ENCODE measurements at regions of chr1 and their contacts with region 1.

Region 1: GRCh38 chr1:206912445-206913095 is 9.2 kb downstream of the FCMR start:
- DNase-seq: peak; percentile 77 to 87
- ATAC-seq: peak; percentile 58 to 71; a peak in 4 of 6 replicates
- H3K4me3 ChIP-seq: no peak overlapping the region
- H3K27ac ChIP-seq: no peak overlapping the region
- H3K4me1 ChIP-seq: peaks cover 4% of the 10 kb centered on the region; the same call in 1 of the 3 replicates
- CTCF ChIP-seq: peak; percentile 79
- EP300 ChIP-seq: no peak
- POLR2A ChIP-seq: no peak
- RAD21 ChIP-seq: peak; percentile 85 to 89

Region 2: DNA sequence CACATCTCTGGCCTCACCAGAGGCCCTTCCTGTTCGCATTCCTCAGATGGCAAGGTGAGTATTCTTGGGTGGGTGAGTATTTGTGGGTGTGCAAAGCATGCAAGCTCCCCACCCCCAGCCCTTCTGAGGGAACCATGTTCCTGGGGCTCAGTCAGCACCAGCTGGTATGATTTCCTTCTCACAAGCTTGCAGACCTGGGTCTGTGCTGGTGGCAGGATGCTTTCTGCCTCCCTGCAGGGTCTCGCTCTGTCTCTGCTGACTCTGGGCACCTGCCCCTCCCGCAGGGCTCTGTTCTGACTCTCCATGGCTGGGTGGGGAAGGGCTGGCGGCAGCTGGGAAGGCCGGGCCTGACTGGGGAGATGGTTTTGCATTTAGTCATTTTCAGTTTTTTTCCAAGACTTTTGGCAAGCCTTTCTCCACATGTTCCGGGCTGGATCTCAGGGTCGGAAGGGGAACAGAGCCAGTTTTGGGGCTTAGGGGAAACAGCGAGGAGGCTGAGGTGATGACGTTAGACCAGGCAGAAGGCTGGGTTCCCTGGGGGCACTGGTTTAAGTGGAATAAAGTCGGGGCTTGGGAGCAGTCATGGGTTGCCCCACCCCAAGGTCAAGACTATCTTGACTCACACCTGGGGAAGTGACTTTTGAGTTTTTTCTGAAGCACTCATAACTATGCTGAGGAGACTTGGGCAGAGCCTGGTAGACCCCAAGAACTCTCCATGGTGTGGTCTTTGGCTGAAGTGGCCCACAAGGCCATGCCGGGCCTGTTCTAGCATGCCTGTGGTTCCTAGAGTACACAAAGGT is 399.1 kb before region 1 on chr1:
- CTCF ChIA-PET with region 1: no interaction called
- POLR2A ChIA-PET with region 1: no interaction called
- DNase-seq: no peak
- ATAC-seq: peak; percentile 42 to 60; a peak in 4 of 6 replicates
- H3K4me3 ChIP-seq: no peak overlapping the region
- H3K27ac ChIP-seq: peak overlapping the region; percentile 39 to 55; a peak in 3 of 6 replicates
- H3K4me1 ChIP-seq: peaks cover 16% of the 10 kb centered on the region
- CTCF ChIP-seq: no peak
- EP300 ChIP-seq: no peak
- POLR2A ChIP-seq: no peak
- RAD21 ChIP-seq: no peak

Region 3: DNA sequence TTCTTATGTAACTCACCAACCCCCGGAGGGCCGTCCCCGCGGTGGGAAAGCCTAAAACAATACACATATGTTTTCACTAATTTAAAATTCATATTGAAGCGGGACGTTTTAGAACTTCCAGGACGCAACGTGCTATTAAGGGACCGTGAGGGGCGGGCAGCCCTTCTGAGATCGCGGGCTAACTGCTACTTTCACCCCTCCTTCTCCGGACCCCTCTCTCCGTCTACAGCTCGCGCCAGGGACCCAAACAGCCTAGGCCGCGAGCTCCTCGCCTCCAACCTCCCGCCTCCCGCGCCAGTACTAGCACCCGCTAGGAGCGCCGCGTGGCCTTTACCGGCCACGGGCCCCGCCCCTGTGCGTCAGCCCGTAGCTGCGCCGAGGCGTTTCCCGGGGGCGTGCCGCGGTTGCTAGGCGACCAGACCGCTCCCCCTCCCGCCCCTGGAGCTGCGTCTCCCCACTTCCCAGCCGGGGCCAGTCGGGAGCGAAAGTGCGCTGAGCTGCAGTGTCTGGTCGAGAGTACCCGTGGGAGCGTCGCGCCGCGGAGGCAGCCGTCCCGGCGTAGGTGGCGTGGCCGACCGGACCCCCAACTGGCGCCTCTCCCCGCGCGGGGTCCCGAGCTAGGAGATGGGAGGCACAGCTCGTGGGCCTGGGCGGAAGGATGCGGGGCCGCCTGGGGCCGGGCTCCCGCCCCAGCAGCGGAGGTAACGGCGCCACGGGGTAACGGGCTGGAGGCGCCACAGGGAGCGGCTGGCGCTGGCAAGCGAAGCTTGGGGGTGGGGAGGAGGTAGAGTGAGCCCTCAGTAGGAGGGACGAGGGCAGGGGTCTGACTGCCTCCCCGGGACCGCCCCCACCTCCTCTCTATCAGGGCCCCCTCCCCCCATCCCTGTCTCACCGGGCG is 277.2 kb before region 1 on chr1 and contains the start of gene DYRK3:
- CTCF ChIA-PET with region 1: interaction called, 31 read pairs
- POLR2A ChIA-PET with region 1: interaction called, 11 read pairs
- DNase-seq: peak; percentile 87 to 93
- ATAC-seq: peak; percentile 91 to 95
- H3K4me3 ChIP-seq: peak within 1 kb of the TSS; percentile 91
- H3K27ac ChIP-seq: peak within 1 kb of the TSS; percentile 88 to 89
- H3K4me1 ChIP-seq: peaks cover 32% of the 10 kb centered on the region; the same call in 2 of the 3 replicates
- CTCF ChIP-seq: no peak
- EP300 ChIP-seq: no peak
- POLR2A ChIP-seq: peak; percentile 91
- RAD21 ChIP-seq: no peak; a peak in 1 of 5 replicates
- polyA plus RNA-seq, gene DYRK3: 7.3 and 9.3 TPM in 2 replicates

Region 4: DNA sequence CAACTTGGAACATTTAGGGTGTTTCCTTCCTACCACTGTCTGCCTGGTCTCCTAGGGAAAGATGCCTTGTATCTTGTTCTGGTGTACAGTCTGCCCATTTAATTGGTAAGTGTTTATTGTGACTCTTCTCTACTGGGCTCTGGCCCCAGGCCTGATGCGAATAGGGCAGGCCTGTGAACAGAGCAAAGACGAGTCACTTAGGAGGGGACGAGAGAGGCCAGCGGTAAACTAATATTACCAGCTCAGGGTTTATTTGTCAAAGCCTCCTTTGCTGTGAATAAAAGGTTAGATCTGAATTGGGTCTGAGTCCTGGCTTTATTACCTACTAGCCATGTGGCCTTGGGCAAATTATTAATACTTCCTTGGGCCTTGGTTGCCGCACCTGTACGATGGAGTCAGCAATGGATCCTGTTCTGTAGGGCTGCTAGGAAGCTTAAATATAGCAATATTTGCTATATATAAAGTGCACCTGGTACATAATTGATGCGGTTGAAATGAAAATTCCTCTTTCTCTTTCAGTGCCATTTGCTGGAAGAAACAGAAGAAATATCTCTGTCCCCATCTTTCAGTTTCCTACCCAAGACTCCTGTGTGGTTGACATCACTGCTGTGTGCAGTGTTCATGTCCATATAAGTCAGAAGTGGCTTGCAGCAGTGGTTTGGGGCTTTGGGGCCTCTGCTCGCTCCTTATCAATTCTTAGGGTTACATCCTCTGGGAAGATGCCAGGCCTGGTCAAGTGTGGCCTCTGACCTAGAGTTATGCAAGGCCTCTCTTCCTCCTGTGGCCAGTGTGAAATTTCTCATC is 195.5 kb before region 1 on chr1:
- CTCF ChIA-PET with region 1: interaction called, 96 read pairs
- POLR2A ChIA-PET with region 1: no interaction called
- DNase-seq: no peak
- ATAC-seq: no peak
- H3K4me3 ChIP-seq: no peak overlapping the region
- H3K27ac ChIP-seq: peak overlapping the region; percentile 70 to 74
- H3K4me1 ChIP-seq: peaks cover 88% of the 10 kb centered on the region
- CTCF ChIP-seq: no peak
- EP300 ChIP-seq: no peak
- POLR2A ChIP-seq: no peak
- RAD21 ChIP-seq: no peak

Region 5: GRCh38 chr1:206786212-206786886 is 126.2 kb before region 1 on chr1:
- CTCF ChIA-PET with region 1: interaction called, 11 read pairs
- POLR2A ChIA-PET with region 1: no interaction called
- DNase-seq: no peak
- ATAC-seq: no peak
- H3K4me3 ChIP-seq: no peak overlapping the region
- H3K27ac ChIP-seq: no peak overlapping the region
- H3K4me1 ChIP-seq: no peaks in the 10 kb centered on the region
- CTCF ChIP-seq: no peak
- EP300 ChIP-seq: no peak
- POLR2A ChIP-seq: no peak
- RAD21 ChIP-seq: no peak

Region 6: GRCh38 chr1:206865013-206865671 is 47.4 kb before region 1 on chr1 and contains the start of gene IL20:
- CTCF ChIA-PET with region 1: interaction called, 17 read pairs
- POLR2A ChIA-PET with region 1: no interaction called
- DNase-seq: peak; percentile 40 to 76
- ATAC-seq: peak in 1 of 2 experiments; percentile 88; a peak in 3 of 6 replicates
- H3K4me3 ChIP-seq: no peak within 1 kb of the TSS
- H3K27ac ChIP-seq: no peak within 1 kb of the TSS
- H3K4me1 ChIP-seq: peaks cover 7% of the 10 kb centered on the region; the same call in 1 of the 3 replicates
- CTCF ChIP-seq: peak; percentile 69
- EP300 ChIP-seq: no peak
- POLR2A ChIP-seq: no peak
- RAD21 ChIP-seq: peak; percentile 58 to 61
- polyA plus RNA-seq, gene IL20: 0.05 and 0.13 TPM in 2 replicates

Region 7: DNA sequence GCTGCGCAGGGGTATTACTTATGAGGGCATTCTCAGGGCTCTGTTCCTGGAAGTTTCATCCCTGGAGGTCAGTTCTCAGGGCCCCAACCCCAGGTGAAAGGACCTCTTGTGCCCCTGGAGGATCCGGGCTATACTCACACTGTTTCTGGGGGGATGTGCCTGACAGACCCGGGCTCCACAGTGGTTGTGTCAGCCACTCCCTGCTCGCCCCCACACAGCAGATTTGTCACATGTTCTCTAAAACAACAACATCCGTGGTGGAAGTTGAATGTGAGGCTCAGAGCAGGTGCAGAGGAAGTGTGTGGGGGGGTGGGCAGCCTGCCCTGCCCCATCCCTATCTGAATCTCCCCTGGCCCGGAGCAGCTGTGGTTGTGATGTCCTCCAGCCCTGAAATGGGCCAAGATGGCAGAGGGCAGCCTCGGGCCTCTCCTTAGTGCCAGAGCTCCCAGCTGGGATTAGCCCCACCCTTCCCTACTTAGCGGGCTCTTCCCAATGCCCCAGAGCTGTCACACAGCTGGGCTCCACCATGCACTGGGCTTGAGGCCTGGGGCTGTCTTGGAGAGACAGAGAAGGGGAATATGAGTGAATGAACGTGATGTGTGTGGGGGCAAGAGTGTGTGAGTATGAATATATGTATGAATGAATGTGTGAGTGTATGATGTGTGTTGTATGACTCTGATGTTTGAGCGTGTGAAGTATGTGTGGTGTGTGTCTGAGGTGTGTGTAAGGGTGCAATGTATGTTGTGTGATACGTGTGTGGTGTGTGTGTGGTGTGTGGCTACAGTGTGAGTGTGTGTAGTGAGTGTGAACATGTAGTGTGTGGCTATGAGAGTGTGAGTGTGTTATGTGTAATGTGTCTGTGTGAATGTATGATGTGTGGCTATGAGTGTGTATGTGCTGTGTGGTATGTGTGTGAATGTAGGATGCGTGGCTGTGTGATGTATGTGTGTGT is 10.7 kb after region 1 on chr1:
- CTCF ChIA-PET with region 1: interaction called, 27 read pairs
- POLR2A ChIA-PET with region 1: no interaction called
- DNase-seq: no peak
- ATAC-seq: no peak
- H3K4me3 ChIP-seq: no peak overlapping the region
- H3K27ac ChIP-seq: no peak overlapping the region
- H3K4me1 ChIP-seq: peaks cover 10% of the 10 kb centered on the region
- CTCF ChIP-seq: no peak
- EP300 ChIP-seq: no peak
- POLR2A ChIP-seq: no peak
- RAD21 ChIP-seq: no peak

Region 8: DNA sequence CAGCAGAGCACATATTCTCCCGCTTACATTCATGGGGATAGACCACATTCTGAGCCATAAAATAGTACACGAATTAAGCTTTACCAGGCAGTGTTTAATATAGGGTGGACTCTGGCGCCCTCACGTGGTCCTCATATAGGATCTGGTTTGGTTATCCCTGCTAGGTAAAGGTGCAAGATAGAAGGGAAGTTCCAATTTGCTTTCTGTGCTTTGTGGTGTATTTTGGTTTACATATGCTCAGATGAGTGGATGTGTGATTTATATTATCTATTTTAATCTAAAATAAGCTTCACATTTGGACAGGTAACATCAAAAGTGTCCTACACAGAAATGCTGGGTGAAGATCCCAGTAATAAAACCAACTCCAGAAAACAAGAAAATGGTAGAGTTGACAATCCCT is 587.0 kb after region 1 on chr1:
- CTCF ChIA-PET with region 1: interaction called, 11 read pairs
- POLR2A ChIA-PET with region 1: no interaction called
- DNase-seq: peak; percentile 55 to 69
- ATAC-seq: peak; percentile 89 to 92
- H3K4me3 ChIP-seq: no peak overlapping the region
- H3K27ac ChIP-seq: no peak overlapping the region
- H3K4me1 ChIP-seq: no peaks in the 10 kb centered on the region
- CTCF ChIP-seq: peak; percentile 92
- EP300 ChIP-seq: no peak
- POLR2A ChIP-seq: no peak
- RAD21 ChIP-seq: peak; percentile 92 to 95

Region 9: GRCh38 chr1:207672522-207673130 is 760.1 kb after region 1 on chr1:
- CTCF ChIA-PET with region 1: no interaction called
- POLR2A ChIA-PET with region 1: no interaction called
- DNase-seq: peak; percentile 27 to 64
- ATAC-seq: peak; percentile 58 to 86; a peak in 3 of 6 replicates
- H3K4me3 ChIP-seq: no peak overlapping the region
- H3K27ac ChIP-seq: no peak overlapping the region
- H3K4me1 ChIP-seq: no peaks in the 10 kb centered on the region
- CTCF ChIP-seq: peak; percentile 54
- EP300 ChIP-seq: no peak
- POLR2A ChIP-seq: no peak
- RAD21 ChIP-seq: peak; percentile 50 to 64; a peak in 4 of 5 replicates

Measured in A549 (cell line).